Activated CD4-positive, alpha-beta T cell treated with anti-CD3 and anti-CD28 coated beads for 36 hours (primary cell): ENCODE measurements at regions of chr6 and their contacts with region 1.

Region 1: DNA sequence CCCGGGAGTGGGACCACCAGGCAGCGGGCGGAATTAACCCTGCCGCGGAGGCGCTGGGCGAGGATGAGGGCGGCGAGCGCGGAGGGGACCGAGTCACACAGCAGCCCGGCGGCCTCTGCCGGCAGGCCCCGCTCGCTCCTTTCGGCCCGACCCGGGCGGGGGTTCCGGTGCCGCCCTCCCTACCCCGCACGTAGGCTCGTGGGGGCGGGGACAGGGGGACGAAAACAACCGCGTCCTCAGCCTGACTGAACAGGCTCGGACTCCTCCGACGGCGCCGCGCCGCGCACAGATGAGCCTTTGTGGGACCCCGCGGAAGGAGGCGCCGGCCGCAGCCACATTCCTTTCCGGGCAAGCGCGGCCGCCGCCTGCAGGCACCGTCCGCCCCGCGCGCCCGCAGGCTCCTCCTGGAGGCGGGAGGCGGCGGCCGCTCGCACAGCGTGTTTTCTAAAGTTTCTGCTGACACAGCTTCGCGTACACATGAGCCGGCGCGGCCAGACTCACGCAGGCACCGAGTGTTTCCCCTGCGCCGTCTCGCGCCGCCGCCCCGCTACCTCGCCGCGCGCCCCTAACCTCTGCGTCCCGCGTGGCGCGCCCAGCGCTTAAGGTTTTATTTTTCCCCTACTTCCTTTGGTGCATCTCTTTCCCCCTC is 244.3 kb downstream of the ARID1B start:
- DNase-seq: peak; percentile 94
- ATAC-seq: peak; percentile 81
- H3K4me3 Mint-ChIP-seq: peak overlapping the region; percentile 88
- H3K27ac Mint-ChIP-seq: peak overlapping the region; percentile 100
- H3K4me1 Mint-ChIP-seq: peaks cover 53% of the 10 kb centered on the region
- H3K27me3 Mint-ChIP-seq: no peaks in the 10 kb centered on the region

Region 2: DNA sequence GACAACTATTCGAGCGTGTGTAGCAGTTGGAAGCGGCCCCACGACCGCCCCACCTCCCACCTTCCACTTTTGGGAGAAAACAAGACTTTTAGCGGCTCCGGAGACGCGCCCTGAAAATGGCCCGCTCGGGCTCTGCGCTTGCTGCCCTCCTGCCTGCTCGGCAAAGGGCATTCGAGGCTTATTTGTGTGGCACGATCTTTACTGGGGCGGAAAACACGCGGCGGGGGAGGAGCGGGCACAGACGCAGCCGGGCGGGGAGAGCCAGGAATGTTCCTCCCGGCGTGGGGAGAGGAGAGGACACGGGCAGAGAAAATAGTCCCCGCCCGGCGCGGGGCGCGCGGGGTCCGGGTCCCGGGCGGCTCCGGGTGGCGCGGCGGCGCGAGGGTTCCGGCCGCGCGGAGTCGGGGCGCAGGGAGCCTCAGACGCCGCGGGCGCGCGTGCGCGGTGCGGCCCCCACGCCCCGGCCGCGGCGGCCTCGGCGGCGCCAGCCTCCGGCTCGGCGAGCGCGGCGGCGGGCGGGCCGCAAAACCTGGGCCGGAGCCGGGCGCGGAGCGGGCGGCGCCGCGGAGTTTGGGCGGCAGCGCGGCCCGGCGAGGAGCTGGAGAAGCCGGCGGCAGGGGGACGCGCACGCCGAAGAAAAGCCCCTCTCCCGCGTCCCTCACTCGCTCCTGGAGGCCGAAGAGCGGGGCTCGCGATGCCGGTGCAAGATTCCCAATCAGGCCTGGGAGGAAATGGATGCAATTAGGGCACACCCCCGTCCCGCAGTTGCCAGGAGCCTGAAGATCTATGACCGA is 334.3 kb before region 1 on chr6:
- CTCF ChIA-PET with region 1: interaction called, 3 read pairs
- POLR2A ChIA-PET with region 1: no interaction called
- intact Hi-C with region 1: loop called (anchors 1 to 2 kb)
- DNase-seq: peak; percentile 81
- ATAC-seq: peak; percentile 88
- H3K4me3 Mint-ChIP-seq: peak overlapping the region; percentile 80
- H3K27ac Mint-ChIP-seq: peak overlapping the region; percentile 95
- H3K4me1 Mint-ChIP-seq: peaks cover 39% of the 10 kb centered on the region
- H3K27me3 Mint-ChIP-seq: peaks cover 2% of the 10 kb centered on the region

Region 3: DNA sequence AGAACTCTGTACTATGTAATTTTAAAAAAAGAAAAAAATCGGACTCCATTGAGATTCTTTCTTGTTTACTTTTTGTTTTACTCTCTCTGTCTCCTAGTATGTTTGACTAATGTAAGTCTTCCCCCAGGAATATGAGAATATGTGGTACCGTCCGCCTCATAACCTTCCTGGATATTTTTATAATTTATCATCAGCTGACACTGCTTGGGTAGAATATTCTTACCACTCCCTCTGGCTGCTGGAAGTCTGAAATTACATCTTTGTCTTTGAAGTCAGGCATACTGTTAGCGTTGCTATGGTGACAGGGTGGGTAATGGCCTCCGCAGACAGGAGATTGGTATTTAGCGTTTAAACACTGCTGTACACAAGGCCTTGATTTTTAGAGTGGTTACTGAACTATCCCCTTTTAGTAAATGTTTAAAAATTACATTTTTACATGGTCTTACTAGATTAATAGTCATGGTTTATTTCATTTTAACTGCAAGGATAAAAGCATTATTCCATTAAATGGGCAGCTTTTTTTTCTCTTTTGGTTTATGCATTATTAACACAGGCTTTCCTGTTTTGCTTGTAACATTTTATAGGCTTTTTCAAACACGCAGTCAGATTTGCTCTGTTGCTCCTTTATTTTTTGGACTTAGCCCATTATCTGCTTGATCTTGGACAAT is 67.9 kb before region 1 on chr6:
- CTCF ChIA-PET with region 1: no interaction called
- POLR2A ChIA-PET with region 1: interaction called, 3 read pairs
- intact Hi-C with region 1: loop called in 1 of 2 experiments (anchors 1 kb)
- DNase-seq: peak; percentile 48
- ATAC-seq: peak; percentile 44
- H3K4me3 Mint-ChIP-seq: no peak overlapping the region
- H3K27ac Mint-ChIP-seq: peak overlapping the region; percentile 43
- H3K4me1 Mint-ChIP-seq: peaks cover 66% of the 10 kb centered on the region
- H3K27me3 Mint-ChIP-seq: no peaks in the 10 kb centered on the region

Region 4: DNA sequence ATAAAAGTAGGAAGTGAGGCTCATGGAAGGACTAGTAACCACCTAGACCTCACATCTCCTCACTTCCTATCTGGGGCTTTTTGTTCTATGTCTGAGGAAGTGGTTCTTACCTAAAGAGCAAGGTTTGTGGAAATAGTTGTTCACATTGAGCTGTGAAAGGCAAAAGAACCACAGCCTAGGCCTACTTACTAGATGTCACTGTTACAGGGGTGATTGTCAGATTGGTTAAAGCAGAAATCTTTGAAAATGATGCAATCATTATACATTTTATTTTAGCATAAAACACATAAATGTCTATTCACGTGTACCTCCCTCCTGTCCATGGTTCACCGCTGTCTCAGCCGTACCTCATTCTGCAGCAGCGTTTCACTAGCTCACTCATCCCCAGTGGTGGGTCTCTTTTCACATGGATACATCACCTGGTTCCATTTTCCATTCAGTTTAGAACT is 33.1 kb after region 1 on chr6:
- CTCF ChIA-PET with region 1: no interaction called
- POLR2A ChIA-PET with region 1: interaction called, 6 read pairs
- intact Hi-C with region 1: loop called in 1 of 2 experiments (anchors 1 kb)
- DNase-seq: peak; percentile 49
- ATAC-seq: peak; percentile 80
- H3K4me3 Mint-ChIP-seq: peak overlapping the region; percentile 15
- H3K27ac Mint-ChIP-seq: peak overlapping the region; percentile 89
- H3K4me1 Mint-ChIP-seq: peaks cover 41% of the 10 kb centered on the region
- H3K27me3 Mint-ChIP-seq: no peaks in the 10 kb centered on the region

Region 5: GRCh38 chr6:157221007-157221816 is 199.7 kb after region 1 on chr6:
- CTCF ChIA-PET with region 1: no interaction called
- POLR2A ChIA-PET with region 1: no interaction called
- intact Hi-C with region 1: loop called in 1 of 2 experiments (anchors 1 kb)
- DNase-seq: peak; percentile 93
- ATAC-seq: peak; percentile 92
- H3K4me3 Mint-ChIP-seq: peak overlapping the region; percentile 75
- H3K27ac Mint-ChIP-seq: peak overlapping the region; percentile 91
- H3K4me1 Mint-ChIP-seq: peaks cover 38% of the 10 kb centered on the region
- H3K27me3 Mint-ChIP-seq: no peaks in the 10 kb centered on the region

Region 6: DNA sequence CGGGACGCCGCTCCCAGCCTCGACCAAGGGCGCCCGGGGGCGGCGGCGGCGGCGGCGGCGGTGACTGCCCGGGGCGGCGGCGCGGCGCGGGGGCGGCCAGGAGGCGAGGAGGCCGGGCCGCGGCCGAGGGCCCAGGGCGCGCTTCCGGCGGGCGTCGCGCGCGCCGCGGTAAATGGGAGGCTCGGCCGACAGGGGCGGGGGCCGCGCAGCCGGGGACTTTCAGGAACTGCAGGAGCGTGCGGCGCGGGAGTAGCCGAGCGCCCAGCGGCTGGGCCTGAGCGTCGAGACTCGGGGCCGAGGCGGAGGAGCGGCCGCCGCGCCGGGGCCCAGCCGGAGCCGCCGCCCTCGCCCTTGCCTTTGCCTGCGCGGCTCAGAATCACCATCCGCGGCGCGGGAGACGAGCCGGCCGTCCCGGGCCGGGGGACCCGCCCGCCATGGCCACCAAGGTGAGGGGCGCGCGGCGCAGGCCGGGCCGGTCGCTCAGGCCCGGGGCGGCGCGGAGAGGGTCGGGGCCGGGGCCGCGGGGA is 801.6 kb after region 1 on chr6 and contains the start of gene SNX9:
- CTCF ChIA-PET with region 1: no interaction called
- POLR2A ChIA-PET with region 1: no interaction called
- intact Hi-C with region 1: loop called in 1 of 2 experiments (anchors 5 kb)
- DNase-seq: peak; percentile 84
- ATAC-seq: peak; percentile 59
- H3K4me3 Mint-ChIP-seq: peak within 1 kb of the TSS; percentile 92
- H3K27ac Mint-ChIP-seq: peak within 1 kb of the TSS; percentile 99
- H3K4me1 Mint-ChIP-seq: peaks cover 48% of the 10 kb centered on the region
- H3K27me3 Mint-ChIP-seq: peaks cover 11% of the 10 kb centered on the region
- total RNA-seq, gene SNX9: 39.4 to 43.3 TPM